Common myeloid progenitor, CD34-positive (primary cell): ENCODE measurements at regions of chr17 and their contacts with region 1.

Region 1: DNA sequence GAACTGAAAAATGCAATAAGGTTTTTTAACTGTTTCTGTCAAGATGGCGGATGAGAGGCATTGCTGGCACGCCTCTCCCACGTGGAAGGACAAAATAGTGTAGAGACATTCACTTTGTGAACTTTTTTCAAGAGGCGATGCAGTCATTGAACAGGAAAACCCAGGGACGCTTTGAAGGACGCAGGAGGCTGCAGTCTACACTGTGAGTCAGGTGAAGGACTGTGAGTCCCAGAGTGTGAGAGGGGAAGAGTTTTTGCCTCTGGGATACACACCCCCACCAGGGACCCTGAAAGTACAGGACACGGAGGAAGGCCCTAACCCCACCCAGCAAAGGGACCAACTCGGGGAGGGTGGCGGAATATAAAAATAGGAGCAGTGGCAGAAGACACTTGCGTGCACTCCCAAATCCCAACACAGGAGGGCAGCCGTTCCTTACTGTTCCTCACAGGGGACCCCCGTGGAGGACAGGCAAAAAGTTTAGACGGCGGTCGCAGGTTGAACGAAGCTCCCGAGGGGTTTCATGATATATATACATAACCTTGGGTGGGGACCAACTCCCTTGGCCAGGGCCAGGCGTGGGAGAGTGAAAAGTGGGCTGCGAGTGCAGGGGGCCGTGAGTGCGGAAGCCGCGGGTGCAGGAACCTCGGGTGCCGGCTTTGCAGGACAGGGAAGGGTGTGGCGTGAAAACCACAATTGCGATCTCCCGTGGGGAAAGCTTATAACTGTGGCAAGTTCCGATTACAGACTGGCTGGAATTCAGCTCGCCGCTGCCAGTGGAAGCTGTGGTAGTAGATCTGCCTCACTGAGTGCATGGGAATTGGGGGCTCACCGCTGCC is 82.0 kb upstream of the ALOX12 start:
- DNase-seq: peak; percentile 77 to 87 (median 84)
- H3K4me3 ChIP-seq: peak overlapping the region in 6 of 7 experiments; percentile 16 to 73 (median 54)
- H3K27ac ChIP-seq: no peak overlapping the region
- H3K4me1 ChIP-seq: peaks cover 7 to 22% (median 9%) of the 10 kb centered on the region in 4 experiments
- H3K27me3 ChIP-seq: peaks cover 0 to 5% (median 0%) of the 10 kb centered on the region in 5 experiments

Region 2: GRCh38 chr17:6843241-6843880 is 70.5 kb before region 1 on chr17:
- CTCF ChIA-PET with region 1: interaction called, 18 read pairs
- POLR2A ChIA-PET with region 1: interaction called, 4 read pairs
- DNase-seq: peak; percentile 73 to 83 (median 82)
- H3K4me3 ChIP-seq: peak overlapping the region in 1 of 7 experiments; percentile 50
- H3K27ac ChIP-seq: no peak overlapping the region
- H3K4me1 ChIP-seq: peaks cover 0 to 20% (median 5%) of the 10 kb centered on the region in 4 experiments
- H3K27me3 ChIP-seq: peaks cover 2 to 11% (median 3%) of the 10 kb centered on the region in 5 experiments

Region 3: DNA sequence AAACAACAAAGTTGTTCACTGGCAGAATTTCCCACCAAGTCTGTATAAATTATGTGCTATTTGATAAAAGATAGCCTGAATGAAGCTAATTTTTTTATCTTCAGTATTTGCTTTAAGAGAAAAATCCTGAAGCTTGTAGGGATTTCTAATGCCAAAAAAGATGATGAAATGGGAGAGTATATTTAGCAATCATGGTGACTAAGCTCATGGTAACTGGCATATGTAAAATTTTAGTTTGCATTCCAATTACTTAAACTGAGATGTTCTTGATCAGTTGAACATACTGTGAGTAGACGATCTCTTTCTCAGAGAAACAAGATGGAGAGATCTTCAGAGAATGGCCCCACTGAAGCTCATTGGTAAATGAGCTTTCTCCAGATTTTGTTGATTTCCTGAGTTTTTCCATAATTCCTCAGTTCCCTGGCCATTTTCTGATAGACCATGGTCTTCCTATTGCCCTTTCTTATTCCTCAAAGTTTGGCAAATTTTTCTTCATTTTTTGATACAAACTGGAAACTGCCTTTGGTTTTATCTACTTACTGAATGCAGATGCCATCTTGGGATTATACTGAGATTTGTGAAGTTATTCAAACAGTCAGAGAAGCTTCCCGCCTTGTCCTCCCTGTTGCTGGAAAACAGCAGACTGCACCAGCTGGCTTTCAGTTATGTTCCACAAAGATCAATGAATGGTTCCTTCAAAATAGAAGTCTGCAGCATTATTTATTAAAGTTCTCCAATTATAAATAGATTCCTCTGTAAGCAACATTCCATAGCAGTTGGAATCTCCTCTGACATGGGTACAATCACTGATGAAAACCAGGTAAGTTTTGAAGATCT is 13.7 kb after region 1 on chr17:
- CTCF ChIA-PET with region 1: interaction called, 20 read pairs
- POLR2A ChIA-PET with region 1: no interaction called
- DNase-seq: no peak
- H3K4me3 ChIP-seq: no peak overlapping the region
- H3K27ac ChIP-seq: no peak overlapping the region
- H3K4me1 ChIP-seq: peaks cover 0 to 13% (median 4%) of the 10 kb centered on the region in 4 experiments
- H3K27me3 ChIP-seq: no peaks in the 10 kb centered on the region

Region 4: GRCh38 chr17:6986676-6987075 is 72.8 kb after region 1 on chr17:
- CTCF ChIA-PET with region 1: interaction called, 10 read pairs
- POLR2A ChIA-PET with region 1: no interaction called
- DNase-seq: no peak
- H3K4me3 ChIP-seq: no peak overlapping the region
- H3K27ac ChIP-seq: no peak overlapping the region
- H3K4me1 ChIP-seq: peaks cover 4 to 11% (median 6%) of the 10 kb centered on the region in 4 experiments
- H3K27me3 ChIP-seq: no peaks in the 10 kb centered on the region

Region 5: DNA sequence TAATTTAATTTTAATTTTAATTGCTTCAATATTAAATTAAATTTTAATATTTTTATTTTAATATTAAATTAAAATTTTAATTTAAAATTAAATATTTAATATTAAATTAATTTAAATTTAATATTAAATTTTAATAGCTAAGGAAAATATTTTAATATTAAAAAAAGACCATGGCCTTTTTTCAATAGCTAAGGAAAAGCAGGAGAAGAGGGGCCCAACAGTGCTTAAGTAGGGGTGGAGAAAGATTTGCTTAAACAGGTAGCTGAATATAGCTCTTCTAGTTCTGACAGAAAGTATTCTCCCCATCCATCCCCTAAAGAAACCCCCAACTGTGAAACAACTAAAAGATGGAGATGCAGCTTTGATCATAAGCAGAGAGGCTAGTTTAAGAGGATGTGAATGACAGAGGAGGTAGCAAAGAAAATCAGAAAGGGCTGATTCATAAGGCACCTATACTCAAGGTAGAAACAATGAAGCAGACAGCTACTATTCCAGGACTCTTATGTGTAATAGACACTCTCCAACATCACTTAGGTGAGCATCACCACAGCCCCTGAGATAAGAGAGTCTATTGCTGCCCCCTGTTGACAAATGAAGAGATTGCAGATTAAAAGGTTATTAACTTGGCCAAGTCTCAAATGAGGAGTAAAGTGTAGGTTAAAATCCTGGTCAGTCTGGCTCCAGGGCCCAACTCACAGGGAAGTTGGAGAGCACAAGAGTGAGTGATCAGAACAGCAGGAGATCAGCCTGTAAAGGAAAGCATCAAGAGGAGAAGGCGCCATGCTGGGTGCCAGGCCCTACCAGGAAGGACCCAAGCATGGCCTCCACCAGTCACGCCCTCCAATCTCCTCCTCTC is 90.8 kb after region 1 on chr17:
- CTCF ChIA-PET with region 1: interaction called, 266 read pairs
- POLR2A ChIA-PET with region 1: interaction called, 5 read pairs
- DNase-seq: peak; percentile 64 to 84 (median 83)
- H3K4me3 ChIP-seq: no peak overlapping the region
- H3K27ac ChIP-seq: no peak overlapping the region
- H3K4me1 ChIP-seq: no peaks in the 10 kb centered on the region
- H3K27me3 ChIP-seq: no peaks in the 10 kb centered on the region